ENCODE measurements at regions of chr22 and their contacts with region 1.

Region 1: DNA sequence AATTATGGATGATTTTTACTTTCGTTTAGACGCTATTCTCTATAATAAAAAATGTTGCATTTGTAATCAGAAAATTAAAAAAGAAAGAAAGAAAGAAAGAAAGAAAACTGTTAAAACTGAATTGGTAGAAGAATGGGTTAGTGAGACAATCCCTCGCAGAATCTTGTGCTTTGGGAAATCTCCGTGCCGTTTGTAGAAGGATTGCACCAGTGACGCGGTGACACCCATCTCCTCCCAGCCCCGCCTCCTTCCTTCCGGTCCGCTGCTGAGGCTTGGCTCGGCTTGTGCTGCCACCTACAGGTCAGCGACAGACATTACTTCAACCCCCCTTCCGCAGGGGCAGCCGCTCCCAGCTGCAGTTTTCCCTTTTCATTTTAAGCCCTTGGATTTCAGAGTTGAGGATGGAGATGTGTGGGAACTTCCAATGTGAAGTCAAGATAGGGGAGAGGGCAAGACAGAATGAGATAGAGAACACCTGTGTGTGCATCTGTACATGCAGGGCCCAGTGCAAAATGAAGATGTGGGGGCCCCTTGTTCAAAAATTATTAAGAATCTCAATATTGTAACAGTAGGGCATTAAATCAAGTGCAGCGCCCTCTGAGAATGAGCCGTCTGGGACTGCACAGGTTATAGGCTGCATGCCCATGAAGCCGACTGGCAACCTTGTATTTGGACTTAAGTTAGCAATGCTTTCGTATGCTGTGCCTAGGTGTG is 41.1 kb downstream of the TST start:
- DNase-seq: peak; percentile 57
- ATAC-seq: peak; percentile 90
- H3K4me3 ChIP-seq: peak overlapping the region; percentile 34 to 57
- H3K27ac ChIP-seq: peak overlapping the region; percentile 1; the same call in 1 of the 2 replicates
- H3K4me1 ChIP-seq: no peaks in the 10 kb centered on the region
- H3K27me3 ChIP-seq: no peaks in the 10 kb centered on the region
- CTCF ChIP-seq: peak; percentile 83

Region 2: GRCh38 chr22:36546092-36546804 is 431.9 kb before region 1 on chr22:
- CTCF ChIA-PET with region 1: no interaction called
- POLR2A ChIA-PET with region 1: no interaction called
- in situ Hi-C with region 1: no loop called
- intact Hi-C with region 1: loop called (anchors 2 kb)
- DNase-seq: no peak
- ATAC-seq: peak; percentile 67
- H3K4me3 ChIP-seq: peak overlapping the region; percentile 11 to 50; a peak in 3 of 4 replicates
- H3K27ac ChIP-seq: peak overlapping the region; percentile 81
- H3K4me1 ChIP-seq: peaks cover 35% of the 10 kb centered on the region
- H3K27me3 ChIP-seq: no peaks in the 10 kb centered on the region
- CTCF ChIP-seq: peak; percentile 82

Region 3: GRCh38 chr22:36781656-36782627 is 196.2 kb before region 1 on chr22:
- CTCF ChIA-PET with region 1: no interaction called
- POLR2A ChIA-PET with region 1: no interaction called
- in situ Hi-C with region 1: no loop called
- intact Hi-C with region 1: loop called (anchors 5 kb)
- DNase-seq: no peak
- ATAC-seq: peak; percentile 94
- H3K4me3 ChIP-seq: no peak overlapping the region
- H3K27ac ChIP-seq: no peak overlapping the region
- H3K4me1 ChIP-seq: peaks cover 4% of the 10 kb centered on the region; the same call in 1 of the 2 replicates
- H3K27me3 ChIP-seq: no peaks in the 10 kb centered on the region
- CTCF ChIP-seq: peak; percentile 90

Region 4: GRCh38 chr22:36856121-36856791 is 121.8 kb before region 1 on chr22:
- CTCF ChIA-PET with region 1: interaction called, 8 read pairs
- POLR2A ChIA-PET with region 1: no interaction called
- in situ Hi-C with region 1: no loop called
- intact Hi-C with region 1: loop called (anchors 5 kb)
- DNase-seq: peak; percentile 64
- ATAC-seq: peak; percentile 95
- H3K4me3 ChIP-seq: 0 out of 4 replicates have a peak overlapping the region, but pooled peaks of 1 of the 2 experiments have one; percentile 18
- H3K27ac ChIP-seq: no peak overlapping the region
- H3K4me1 ChIP-seq: no peaks in the 10 kb centered on the region
- H3K27me3 ChIP-seq: no peaks in the 10 kb centered on the region
- CTCF ChIP-seq: peak; percentile 99

Region 5: DNA sequence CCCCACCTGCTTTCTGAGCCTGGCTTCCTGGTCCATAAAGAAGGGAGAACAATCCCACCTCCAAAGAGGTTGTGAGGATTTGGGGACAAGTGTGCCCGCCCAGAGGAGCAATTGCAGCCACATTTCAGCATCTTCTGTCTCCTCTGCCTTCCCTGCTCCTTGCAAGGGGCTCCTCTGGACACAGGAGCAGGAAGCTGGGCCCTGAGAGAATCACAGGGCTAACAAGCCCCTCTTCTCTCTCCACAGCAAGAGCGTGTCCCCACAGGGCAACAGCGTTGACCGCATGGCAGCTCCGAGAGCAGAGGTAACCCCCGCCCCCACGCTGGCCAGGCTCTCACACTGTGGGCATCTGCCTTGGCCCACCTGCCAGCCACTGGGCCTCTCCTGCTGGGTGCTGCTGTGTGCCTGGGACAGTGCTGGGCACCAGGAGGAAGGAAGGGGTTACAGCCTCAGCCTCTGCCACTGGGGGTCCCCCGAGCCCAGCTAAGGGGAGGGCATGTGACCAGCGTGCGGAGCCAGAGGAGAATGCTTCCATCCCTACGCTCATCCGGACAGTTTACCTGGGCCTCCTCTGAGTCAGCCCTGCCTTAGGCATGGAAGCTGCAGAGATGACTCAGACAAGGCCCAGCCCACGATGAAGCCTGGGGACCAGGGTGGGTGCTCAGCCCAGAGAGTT is 106.6 kb before region 1 on chr22:
- CTCF ChIA-PET with region 1: no interaction called
- POLR2A ChIA-PET with region 1: interaction called, 12 read pairs
- in situ Hi-C with region 1: no loop called
- intact Hi-C with region 1: no loop called
- DNase-seq: no peak
- ATAC-seq: peak; percentile 63; the same call in 1 of the 2 replicates
- H3K4me3 ChIP-seq: no peak overlapping the region
- H3K27ac ChIP-seq: no peak overlapping the region
- H3K4me1 ChIP-seq: no peaks in the 10 kb centered on the region
- H3K27me3 ChIP-seq: no peaks in the 10 kb centered on the region; the same call in 1 of the 2 replicates
- CTCF ChIP-seq: no peak